ENCODE measurements at regions of chr14 and their contacts with region 1.

Region 1: DNA sequence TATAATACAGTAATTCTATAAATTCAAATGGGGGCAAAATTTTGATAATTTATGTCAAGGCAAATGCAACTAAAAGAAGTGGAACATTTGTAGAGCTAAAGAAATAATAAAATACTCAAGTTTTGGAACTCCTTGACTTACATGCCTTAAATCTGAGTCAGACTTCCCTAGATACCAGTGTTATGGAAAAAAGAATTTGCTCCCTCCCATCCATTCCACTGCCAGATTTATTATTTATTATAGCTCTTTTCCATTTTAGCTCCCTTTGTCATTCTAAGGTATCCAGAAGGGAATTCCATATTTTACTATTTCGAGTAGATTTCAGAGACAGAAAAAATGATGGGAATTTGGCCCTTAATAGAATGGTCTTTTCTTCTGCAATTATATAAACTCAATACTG is 44.0 kb downstream of the RHOJ start:
- DNase-seq: no peak
- H3K4me3 ChIP-seq: no peak overlapping the region
- H3K27ac ChIP-seq: peak overlapping the region; percentile 45 to 66
- H3K4me1 ChIP-seq: peaks cover 0 to 11% of the 10 kb centered on the region in 2 donors
- H3K27me3 ChIP-seq: no peaks in the 10 kb centered on the region
- CTCF ChIP-seq: no peak

Region 2: DNA sequence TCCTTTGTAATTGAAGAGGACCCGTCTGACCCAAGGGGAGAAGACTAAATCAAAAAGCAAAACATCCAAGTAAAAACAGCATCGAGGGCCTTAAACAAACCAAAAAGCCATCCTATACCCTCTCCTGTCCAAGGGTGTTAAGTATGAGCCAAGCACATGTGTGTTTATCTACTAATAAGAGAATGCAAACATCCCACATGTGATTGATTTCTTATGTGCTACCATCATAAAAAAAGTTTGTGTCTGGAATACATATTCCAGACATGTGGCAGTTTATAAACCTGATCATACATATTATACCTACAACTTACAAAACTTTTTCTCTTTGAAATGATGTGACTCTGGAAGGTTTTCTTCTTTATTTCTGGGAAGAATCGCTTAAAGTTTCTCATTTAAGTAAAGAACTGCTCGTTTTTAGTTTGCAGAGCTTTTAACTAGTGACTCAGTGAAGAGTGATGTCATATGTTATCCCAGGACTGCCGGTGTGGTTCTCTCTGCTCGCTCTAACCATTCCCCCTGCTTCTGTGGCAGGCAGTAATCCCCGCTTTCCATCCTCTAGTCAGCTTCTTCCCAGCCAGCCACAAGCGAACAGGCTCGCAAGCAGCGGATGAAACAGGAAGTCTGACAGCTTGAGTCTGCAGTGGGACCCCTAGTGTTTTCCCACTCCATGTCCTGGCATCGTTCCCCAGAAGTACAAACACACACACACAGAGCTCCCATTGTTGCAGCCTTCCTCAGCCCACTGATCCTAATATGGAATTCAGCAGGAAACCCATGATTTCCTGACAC is 44.4 kb before region 1 on chr14:
- intact Hi-C with region 1: loop called (anchors 2 kb)
- DNase-seq: peak; percentile 13 to 91
- H3K4me3 ChIP-seq: peak overlapping the region; percentile 48 to 69
- H3K27ac ChIP-seq: peak overlapping the region; percentile 90 to 93
- H3K4me1 ChIP-seq: peaks cover 0 to 3% of the 10 kb centered on the region in 2 donors
- H3K27me3 ChIP-seq: no peaks in the 10 kb centered on the region
- CTCF ChIP-seq: peak in 1 of 3 experiments; percentile 17

Region 3: DNA sequence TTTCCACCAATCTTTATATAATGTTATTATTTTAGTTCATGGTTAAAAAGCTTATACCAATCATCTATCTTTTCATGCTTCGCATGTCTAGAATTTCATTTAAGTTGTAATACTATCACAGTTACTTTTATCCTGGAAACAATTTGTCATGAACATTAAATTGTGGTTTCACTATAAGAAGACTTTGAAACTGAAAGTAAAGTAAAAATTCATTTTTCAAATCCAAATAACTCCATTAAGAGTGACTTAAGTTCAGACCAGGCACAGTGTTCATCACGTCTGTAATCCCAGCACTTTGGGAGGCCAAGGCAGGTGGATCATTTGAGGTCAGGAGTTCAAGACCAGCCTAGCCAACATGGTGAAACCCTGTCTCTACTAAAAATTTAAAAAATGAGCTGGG is 1033.6 kb after region 1 on chr14:
- intact Hi-C with region 1: no loop called
- DNase-seq: no peak
- H3K4me3 ChIP-seq: no peak overlapping the region
- H3K27ac ChIP-seq: no peak overlapping the region
- H3K4me1 ChIP-seq: no peaks in the 10 kb centered on the region
- H3K27me3 ChIP-seq: no peaks in the 10 kb centered on the region
- CTCF ChIP-seq: no peak

Measured in ascending aorta (tissue), 2 donors.